ENCODE measurements at regions of chr19 and their contacts with region 1.

Region 1: DNA sequence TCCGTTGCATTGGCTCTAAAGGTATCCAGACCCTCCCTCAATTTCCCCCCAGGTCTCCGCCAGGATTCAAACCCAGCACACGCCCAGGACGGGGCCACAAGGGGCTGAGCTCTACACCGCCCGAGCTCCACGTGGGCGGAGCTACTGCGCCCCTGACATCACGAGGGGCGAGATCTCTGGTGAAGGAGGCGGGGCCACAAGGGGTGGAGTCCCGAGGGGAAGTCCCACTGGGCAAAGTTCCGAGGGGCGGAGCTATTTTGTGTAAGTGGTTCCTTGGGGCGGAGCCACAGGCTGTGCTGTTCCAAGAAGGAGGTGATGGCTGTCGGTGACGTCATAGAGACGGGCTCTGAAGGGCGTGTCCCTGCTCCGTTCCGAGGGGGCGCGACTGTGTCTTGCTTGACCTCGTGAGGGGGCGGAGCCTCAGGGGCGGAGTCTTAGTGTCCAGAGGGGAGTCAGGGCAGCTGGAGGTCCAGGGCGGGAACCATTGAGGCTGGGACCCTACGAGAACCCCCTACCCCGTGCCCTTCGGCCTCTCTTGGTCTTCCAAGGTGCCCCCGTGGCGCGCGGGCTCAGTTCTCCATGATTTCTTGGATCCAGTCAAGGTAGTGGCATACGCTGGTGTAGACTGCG is 1.3 kb upstream of the KLK8 start:
- DNase-seq: peak; percentile 99
- ATAC-seq: peak; percentile 86
- H3K4me3 ChIP-seq: peak overlapping the region; percentile 78 to 88
- H3K27ac ChIP-seq: peak overlapping the region; percentile 77
- H3K4me1 ChIP-seq: peaks cover 16 to 36% of the 10 kb centered on the region in 2 experiments
- H3K27me3 ChIP-seq: no peaks in the 10 kb centered on the region
- CTCF ChIP-seq: no peak
- POLR2A ChIP-seq: no peak
- RAD21 ChIP-seq: no peak

Region 2: GRCh38 chr19:50933640-50934039 is 69.0 kb before region 1 on chr19:
- CTCF ChIA-PET with region 1: interaction called, 4 read pairs
- POLR2A ChIA-PET with region 1: interaction called, 6 read pairs
- RAD21 ChIA-PET with region 1: interaction called in 1 of 2 experiments, 4 read pairs
- intact Hi-C with region 1: loop called (anchors 2 kb)
- DNase-seq: no peak
- ATAC-seq: no peak
- H3K4me3 ChIP-seq: peak overlapping the region in 1 of 2 experiments; percentile 1; a peak in 1 of 4 replicates
- H3K27ac ChIP-seq: peak overlapping the region; percentile 78
- H3K4me1 ChIP-seq: peaks cover 47 to 54% of the 10 kb centered on the region in 2 experiments
- H3K27me3 ChIP-seq: no peaks in the 10 kb centered on the region
- CTCF ChIP-seq: no peak
- POLR2A ChIP-seq: no peak
- RAD21 ChIP-seq: 0 out of 2 replicates have a peak, but pooled peaks have one; percentile 5

Region 3: GRCh38 chr19:51123381-51123800 is 120.7 kb after region 1 on chr19:
- CTCF ChIA-PET with region 1: no interaction called
- POLR2A ChIA-PET with region 1: no interaction called
- RAD21 ChIA-PET with region 1: no interaction called
- intact Hi-C with region 1: no loop called
- DNase-seq: no peak
- ATAC-seq: no peak
- H3K4me3 ChIP-seq: no peak overlapping the region
- H3K27ac ChIP-seq: no peak overlapping the region
- H3K4me1 ChIP-seq: peaks cover 0 to 8% of the 10 kb centered on the region in 2 experiments; a peak in 1 of 4 replicates
- H3K27me3 ChIP-seq: 0 out of 2 replicates have a peak, but pooled peaks cover 4% of the 10 kb centered on the region
- CTCF ChIP-seq: no peak
- POLR2A ChIP-seq: no peak
- RAD21 ChIP-seq: no peak

Measured in HCT116 (cell line).